Prostate gland (tissue), 2 donors: ENCODE measurements at regions of chr6 and their contacts with region 1.

Region 1: DNA sequence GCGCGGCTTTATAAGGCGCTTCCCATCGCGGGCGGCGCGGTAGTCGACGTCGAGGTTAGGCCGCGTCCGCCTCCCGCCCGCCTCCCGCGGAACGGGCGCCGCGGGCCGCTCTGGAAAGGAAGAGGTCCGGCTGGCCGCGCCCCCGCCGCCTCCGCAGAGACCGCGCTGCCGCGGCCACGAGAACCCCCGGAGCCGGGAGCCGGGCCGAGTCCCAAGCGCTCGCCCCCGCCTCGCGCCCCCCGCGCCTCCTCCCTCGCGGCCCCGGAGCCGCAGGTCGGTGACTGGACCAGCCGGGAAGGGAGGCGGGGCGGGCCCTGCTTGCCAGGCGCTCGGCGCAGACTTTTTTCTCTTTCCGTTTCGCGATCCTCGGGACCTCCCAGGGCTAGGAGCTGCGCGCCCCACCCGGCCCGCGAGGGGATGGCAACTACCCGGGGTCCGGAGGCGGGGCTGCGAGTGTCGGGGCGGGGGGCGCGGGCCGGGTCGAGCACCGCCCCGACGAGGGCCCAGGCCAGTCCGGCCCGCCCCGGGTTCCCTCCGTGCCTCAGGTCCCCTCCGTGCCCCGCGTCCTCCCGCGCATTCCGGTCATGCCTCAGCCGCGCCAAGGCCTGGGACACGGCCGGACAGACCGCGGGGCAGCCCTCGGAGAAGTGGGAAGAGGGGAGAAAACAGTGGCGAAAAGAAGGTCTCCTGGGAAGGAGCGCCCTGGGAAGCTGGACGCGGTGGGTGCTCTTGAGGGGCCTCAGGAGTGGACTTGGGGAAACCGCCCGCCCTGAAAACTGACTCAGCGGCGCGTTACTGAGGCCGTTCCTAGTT is 423 bp upstream of the PXDC1 start:
- DNase-seq: peak; percentile 80
- H3K4me3 ChIP-seq: peak overlapping the region; percentile 60 to 79
- H3K27ac ChIP-seq: peak overlapping the region; percentile 94 to 97
- H3K4me1 ChIP-seq: peaks cover 12% of the 10 kb centered on the region
- H3K27me3 ChIP-seq: no peaks in the 10 kb centered on the region
- CTCF ChIP-seq: peak in 2 of 4 experiments; percentile 32 to 39
- POLR2A ChIP-seq: peak; percentile 72

Region 2: DNA sequence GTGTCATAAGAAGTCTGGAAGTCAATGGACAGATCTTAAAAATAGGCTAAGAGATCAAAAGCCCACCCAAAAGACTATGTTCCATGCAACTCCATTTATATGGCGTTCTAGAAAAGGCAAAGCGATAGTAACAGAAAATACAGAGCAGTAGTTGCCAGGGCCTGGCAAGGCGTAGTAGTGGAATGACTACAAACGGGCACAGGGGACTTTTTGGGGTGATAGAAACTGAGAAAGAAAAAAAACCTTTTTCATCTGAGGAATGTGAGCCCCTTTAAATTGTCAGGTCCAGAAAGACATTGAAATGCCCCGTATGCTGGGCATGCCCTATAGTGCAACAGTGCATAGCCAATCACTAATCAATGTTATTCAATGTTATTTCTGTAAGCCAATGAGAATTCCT is 50.0 kb after region 1 on chr6:
- intact Hi-C with region 1: loop called (anchors 2 kb)
- DNase-seq: no peak
- H3K4me3 ChIP-seq: no peak overlapping the region
- H3K27ac ChIP-seq: no peak overlapping the region
- H3K4me1 ChIP-seq: no peaks in the 10 kb centered on the region
- H3K27me3 ChIP-seq: no peaks in the 10 kb centered on the region
- CTCF ChIP-seq: no peak
- POLR2A ChIP-seq: no peak

Region 3: GRCh38 chr6:3825851-3826581 is 74.1 kb after region 1 on chr6:
- intact Hi-C with region 1: loop called (anchors 2 kb)
- DNase-seq: peak; percentile 94
- H3K4me3 ChIP-seq: peak overlapping the region in 1 of 2 donors; percentile 13
- H3K27ac ChIP-seq: peak overlapping the region; percentile 91 to 93
- H3K4me1 ChIP-seq: peaks cover 5% of the 10 kb centered on the region
- H3K27me3 ChIP-seq: no peaks in the 10 kb centered on the region
- CTCF ChIP-seq: no peak
- POLR2A ChIP-seq: no peak

Region 4: GRCh38 chr6:3848925-3849605 is 97.1 kb after region 1 on chr6 and contains the start of gene FAM50B:
- intact Hi-C with region 1: loop called (anchors 2 kb)
- DNase-seq: peak; percentile 90
- H3K4me3 ChIP-seq: peak within 1 kb of the TSS; percentile 31 to 38
- H3K27ac ChIP-seq: peak within 1 kb of the TSS; percentile 47 to 64
- H3K4me1 ChIP-seq: no peaks in the 10 kb centered on the region
- H3K27me3 ChIP-seq: no peaks in the 10 kb centered on the region
- CTCF ChIP-seq: peak; percentile 93 to 98 (median 96)
- POLR2A ChIP-seq: peak; percentile 48
- total RNA-seq, gene FAM50B: 14.2 to 36.4 TPM

Region 5: GRCh38 chr6:3990692-3991501 is 239.0 kb after region 1 on chr6:
- intact Hi-C with region 1: loop called (anchors 5 kb)
- DNase-seq: peak; percentile 85
- H3K4me3 ChIP-seq: peak overlapping the region; percentile 15 to 22
- H3K27ac ChIP-seq: peak overlapping the region; percentile 52 to 72
- H3K4me1 ChIP-seq: no peaks in the 10 kb centered on the region
- H3K27me3 ChIP-seq: no peaks in the 10 kb centered on the region
- CTCF ChIP-seq: peak; percentile 45 to 86 (median 70)
- POLR2A ChIP-seq: no peak